Activated B cell treated with CpG ODN at 0.5 μM for 24 hours (primary cell): ENCODE measurements at regions of chr6 and their contacts with region 1.

Region 1: DNA sequence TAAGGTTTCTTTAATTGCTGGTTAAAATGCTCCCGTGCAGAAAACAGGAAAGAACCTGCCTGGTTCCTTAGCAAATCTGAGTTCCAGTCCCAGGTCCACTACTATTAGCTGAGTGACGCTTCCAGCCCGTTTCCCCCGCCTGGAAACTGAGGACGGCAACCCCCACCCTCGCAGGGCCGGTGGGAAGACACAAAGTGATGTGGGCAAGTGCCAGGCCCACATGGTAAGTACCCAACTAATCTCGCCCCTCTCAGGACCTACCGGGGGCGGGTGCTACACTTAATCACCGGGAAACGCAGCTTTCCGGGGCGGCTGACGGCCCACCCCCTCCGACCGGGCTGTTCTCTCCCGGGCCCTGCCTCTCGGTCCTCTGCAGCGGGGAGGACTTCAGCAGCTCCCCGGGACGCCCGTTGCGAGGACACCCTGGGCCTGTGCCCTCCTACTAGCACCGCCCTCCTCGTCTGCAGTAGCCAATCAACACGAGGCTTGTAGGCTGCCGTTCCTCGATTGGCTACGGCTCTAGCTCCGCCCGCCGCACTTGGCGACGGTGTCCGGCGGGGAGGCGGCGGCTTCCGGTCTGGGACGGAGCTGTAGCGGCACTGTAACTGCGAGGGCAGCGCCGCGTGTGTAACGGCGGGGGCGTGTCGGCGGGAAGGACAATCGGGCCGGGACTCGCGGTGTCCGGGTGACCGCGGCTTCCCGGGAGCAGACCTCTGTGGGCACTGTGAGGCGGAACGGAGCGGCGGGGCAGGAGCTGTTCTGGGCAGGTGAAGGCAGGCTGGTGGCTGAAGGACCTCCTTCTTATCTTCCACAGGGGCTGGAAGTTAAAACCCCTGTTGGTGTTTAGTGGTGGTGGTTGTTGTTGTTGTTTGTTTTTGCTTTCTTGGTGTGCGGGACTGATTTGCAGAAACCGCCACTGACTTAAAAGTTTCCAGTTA is at the start of gene ZBTB9:
- DNase-seq: peak; percentile 87
- ATAC-seq: peak; percentile 100
- H3K4me3 Mint-ChIP-seq: peak within 1 kb of the TSS; percentile 97
- H3K27ac Mint-ChIP-seq: peak within 1 kb of the TSS; percentile 88
- H3K4me1 Mint-ChIP-seq: peaks cover 26% of the 10 kb centered on the region
- H3K27me3 Mint-ChIP-seq: no peaks in the 10 kb centered on the region
- CTCF ChIP-seq: no peak
- total RNA-seq, gene ZBTB9: 10.7 and 12.5 TPM in 2 replicates

Region 2: DNA sequence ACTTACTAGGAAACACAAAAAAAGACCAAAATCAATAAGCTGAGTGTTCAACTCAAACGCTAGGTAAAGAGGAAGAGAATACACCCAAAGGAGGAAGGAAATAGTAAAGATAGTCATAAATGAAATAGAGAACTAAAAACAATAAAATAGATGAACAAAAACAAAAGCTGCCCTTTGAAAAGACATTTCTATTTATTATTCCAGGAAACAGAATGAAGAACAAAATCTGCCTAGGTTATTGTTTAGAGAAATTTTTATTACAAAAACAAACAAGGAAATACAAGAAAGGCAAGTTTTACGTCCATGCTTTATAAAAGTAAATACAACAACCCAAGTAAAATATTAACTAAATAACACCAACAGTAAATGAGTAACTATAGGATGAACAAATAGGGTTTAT is 533.6 kb before region 1 on chr6:
- CTCF ChIA-PET with region 1: no interaction called
- POLR2A ChIA-PET with region 1: no interaction called
- intact Hi-C with region 1: no loop called
- DNase-seq: no peak
- ATAC-seq: peak; percentile 40
- H3K4me3 Mint-ChIP-seq: peak overlapping the region; percentile 67
- H3K27ac Mint-ChIP-seq: peak overlapping the region; percentile 81
- H3K4me1 Mint-ChIP-seq: peaks cover 73% of the 10 kb centered on the region
- H3K27me3 Mint-ChIP-seq: no peaks in the 10 kb centered on the region
- CTCF ChIP-seq: no peak

Region 3: DNA sequence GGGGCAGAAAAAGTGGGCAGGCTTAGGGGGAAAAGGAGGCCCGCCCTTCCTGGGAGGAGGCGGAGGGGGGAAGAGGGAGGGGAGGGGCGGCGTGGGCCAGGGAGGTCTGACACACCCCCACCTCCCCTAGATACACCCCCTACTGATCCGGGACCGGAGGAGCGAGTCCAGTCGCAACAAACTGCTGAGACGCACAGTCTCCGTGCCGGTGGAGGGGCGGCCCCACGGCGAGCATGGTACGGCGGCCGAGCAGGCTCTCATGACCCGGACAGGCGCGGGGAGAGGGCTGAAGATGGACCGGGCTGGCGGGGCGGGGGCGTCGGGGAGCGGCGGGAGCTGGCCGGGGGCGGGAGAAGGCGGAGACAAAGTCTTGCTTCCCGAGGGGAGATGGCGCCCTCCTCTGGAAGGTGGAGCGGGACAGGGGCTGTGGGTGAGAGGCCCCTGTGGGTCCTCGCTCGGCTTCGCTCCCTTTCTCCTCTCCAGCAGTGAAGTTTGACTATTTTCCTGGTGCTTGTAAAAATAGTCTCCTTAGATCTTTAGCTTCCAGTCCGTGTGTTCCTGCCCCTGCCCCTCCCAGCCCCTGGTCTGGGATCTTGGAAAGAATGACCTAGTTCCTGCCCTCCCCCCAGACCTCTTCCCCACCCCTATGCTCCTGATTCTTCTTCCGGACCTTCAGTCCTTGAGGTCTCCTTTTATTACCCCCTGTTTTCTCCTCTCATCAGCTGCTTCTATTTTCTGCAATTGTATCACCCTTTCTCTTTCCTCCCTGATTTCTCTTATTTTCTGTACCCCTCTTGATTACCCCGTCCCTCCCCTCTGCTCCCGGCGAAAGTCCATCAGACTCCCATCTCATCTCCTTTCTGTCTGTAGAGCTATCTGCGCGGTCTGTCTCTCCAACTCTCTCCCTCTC is 28.4 kb before region 1 on chr6:
- CTCF ChIA-PET with region 1: interaction called, 5 read pairs
- POLR2A ChIA-PET with region 1: interaction called, 27 read pairs
- intact Hi-C with region 1: loop called (anchors 1 kb)
- DNase-seq: peak; percentile 68
- ATAC-seq: peak; percentile 60
- H3K4me3 Mint-ChIP-seq: peak overlapping the region; percentile 87
- H3K27ac Mint-ChIP-seq: peak overlapping the region; percentile 89
- H3K4me1 Mint-ChIP-seq: peaks cover 66% of the 10 kb centered on the region
- H3K27me3 Mint-ChIP-seq: no peaks in the 10 kb centered on the region
- CTCF ChIP-seq: no peak

Region 4: DNA sequence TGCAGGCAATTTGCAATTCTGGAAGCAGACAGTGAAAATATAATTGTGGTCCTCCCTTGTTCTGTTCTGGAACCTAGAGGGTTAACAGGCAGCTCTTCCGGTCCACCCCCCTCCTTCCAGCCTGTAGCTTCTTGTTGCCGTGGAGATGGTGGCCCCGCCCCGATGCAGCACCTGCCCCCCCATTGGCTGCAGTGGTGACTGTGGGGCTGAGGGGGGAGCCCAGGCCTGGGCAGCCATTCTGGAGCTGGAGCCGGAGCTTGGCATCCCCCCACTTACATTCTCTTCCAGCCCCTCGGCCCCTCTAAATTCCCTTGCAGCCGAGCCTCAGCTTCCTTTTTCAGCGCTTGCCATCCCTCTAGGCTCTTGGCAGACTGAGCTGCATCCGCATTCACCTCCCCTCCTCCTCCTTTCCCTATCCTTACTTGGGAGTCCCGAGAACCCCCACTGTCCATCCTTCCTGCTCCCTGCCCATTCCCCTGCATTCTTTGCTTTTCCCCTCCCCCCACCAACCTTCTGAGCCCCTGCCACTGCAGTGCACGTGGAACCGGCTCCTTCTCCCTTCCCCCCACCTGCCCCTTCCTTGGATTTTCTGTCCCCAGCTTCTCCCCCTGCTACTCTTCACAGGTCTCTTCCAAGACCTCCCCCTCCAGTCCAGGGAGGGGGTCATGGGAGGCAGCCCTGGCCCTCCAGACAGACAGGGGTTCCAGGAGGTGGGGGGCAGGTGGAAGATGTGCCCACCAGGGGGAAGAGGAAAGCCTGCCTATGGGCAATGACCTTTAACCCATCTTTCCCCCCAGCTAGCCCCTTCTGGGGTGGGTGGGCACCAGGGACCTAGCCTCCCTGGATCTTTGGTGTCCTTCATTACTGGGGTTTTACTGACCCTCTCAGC is 23.0 kb before region 1 on chr6:
- CTCF ChIA-PET with region 1: interaction called, 5 read pairs
- POLR2A ChIA-PET with region 1: interaction called, 27 read pairs
- intact Hi-C with region 1: loop called (anchors 1 kb)
- DNase-seq: peak; percentile 69
- ATAC-seq: peak; percentile 56
- H3K4me3 Mint-ChIP-seq: peak overlapping the region; percentile 67
- H3K27ac Mint-ChIP-seq: peak overlapping the region; percentile 60
- H3K4me1 Mint-ChIP-seq: peaks cover 78% of the 10 kb centered on the region
- H3K27me3 Mint-ChIP-seq: no peaks in the 10 kb centered on the region
- CTCF ChIP-seq: no peak